ENCODE measurements at regions of chr2 and their contacts with region 1.

Region 1: GRCh38 chr2:19504400-19505198 is 146.2 kb upstream of the OSR1 start:
- DNase-seq: peak; percentile 39
- H3K4me3 Mint-ChIP-seq: peak overlapping the region; percentile 36
- H3K27ac Mint-ChIP-seq: peak overlapping the region; percentile 59
- H3K4me1 Mint-ChIP-seq: peaks cover 36% of the 10 kb centered on the region
- H3K27me3 Mint-ChIP-seq: no peaks in the 10 kb centered on the region
- CTCF ChIP-seq: no peak

Region 2: GRCh38 chr2:19667085-19667484 is 162.5 kb after region 1 on chr2:
- CTCF ChIA-PET with region 1: interaction called, 4 read pairs
- intact Hi-C with region 1: loop called (anchors 2 kb)
- DNase-seq: no peak
- H3K4me3 Mint-ChIP-seq: no peak overlapping the region
- H3K27ac Mint-ChIP-seq: no peak overlapping the region
- H3K4me1 Mint-ChIP-seq: peaks cover 25% of the 10 kb centered on the region
- H3K27me3 Mint-ChIP-seq: no peaks in the 10 kb centered on the region
- CTCF ChIP-seq: no peak

Measured in Calu3 (cell line).